CD8-positive, alpha-beta T cell (primary cell): ENCODE measurements at regions of chr5 and their contacts with region 1.

Region 1: DNA sequence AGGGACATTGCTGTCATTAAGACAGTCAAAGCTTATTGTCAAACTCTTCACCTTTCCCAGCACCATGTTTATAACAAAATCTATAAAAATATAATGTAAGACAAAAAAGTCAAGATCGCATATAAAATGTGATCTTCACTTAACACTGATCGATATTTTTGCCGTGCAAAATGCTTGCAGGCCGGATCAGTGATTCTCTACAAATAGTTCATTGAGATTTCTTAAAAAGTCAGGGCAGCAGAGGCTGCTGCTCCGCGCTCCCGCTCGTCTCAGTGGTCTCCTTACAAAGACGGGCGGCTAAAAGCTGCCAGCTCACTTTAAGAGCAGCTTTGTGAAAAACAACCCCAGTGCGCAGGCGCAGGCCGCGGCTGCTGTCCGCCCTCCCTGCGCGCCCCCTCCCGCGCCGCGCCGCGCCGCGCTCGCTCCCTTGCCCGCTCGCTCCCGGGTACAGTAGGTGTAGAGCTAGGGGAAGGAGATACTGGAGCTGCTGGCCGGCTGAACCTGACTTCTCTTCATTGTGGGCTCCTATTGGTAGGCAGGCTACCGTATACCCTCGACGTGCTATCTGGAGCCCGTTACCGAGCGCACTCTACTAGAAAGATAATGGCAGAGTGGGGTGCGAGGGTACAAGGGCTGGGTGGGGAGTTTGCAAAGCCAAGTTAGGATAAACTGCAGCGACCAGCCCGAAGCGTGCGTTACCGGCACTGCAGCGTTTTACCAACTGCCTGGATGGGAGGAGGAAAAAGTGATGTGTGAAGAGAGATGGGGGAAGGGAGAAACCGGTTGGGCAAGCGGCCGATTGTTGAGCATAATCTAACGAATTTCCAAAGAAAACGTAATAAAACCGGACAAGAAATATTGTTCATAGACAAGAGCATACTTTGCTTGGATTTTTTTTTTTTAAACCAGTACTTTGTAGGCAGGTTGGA is at the start of gene ARRDC3:
- DNase-seq: peak; percentile 94 to 99 (median 97)
- ATAC-seq: peak; percentile 30
- H3K4me3 ChIP-seq: peak within 1 kb of the TSS; percentile 73 to 99
- H3K4me3 Mint-ChIP-seq: peak within 1 kb of the TSS; percentile 98
- H3K27ac ChIP-seq: peak within 1 kb of the TSS; percentile 96 to 100
- H3K27ac Mint-ChIP-seq: peak within 1 kb of the TSS; percentile 100
- H3K4me1 ChIP-seq: peaks cover 17% of the 10 kb centered on the region
- H3K4me1 Mint-ChIP-seq: peaks cover 26% of the 10 kb centered on the region
- H3K27me3 ChIP-seq: no peaks in the 10 kb centered on the region
- H3K27me3 Mint-ChIP-seq: no peaks in the 10 kb centered on the region
- CTCF ChIP-seq: no peak
- total RNA-seq, gene ARRDC3: 131 to 132 TPM

Region 2: GRCh38 chr5:90474235-90475109 is 908.8 kb before region 1 on chr5 and contains the starts of genes MBLAC2 and POLR3G:
- CTCF ChIA-PET with region 1: no interaction called
- POLR2A ChIA-PET with region 1: interaction called, 12 read pairs
- intact Hi-C with region 1: loop called (anchors 2 to 10 kb)
- DNase-seq: peak; percentile 88 to 96 (median 93)
- ATAC-seq: peak; percentile 88
- H3K4me3 ChIP-seq: peak within 1 kb of the TSS; percentile 93 to 95
- H3K4me3 Mint-ChIP-seq: peak within 1 kb of the TSS; percentile 99
- H3K27ac ChIP-seq: peak within 1 kb of the TSS; percentile 68 to 76
- H3K27ac Mint-ChIP-seq: peak within 1 kb of the TSS; percentile 96
- H3K4me1 ChIP-seq: peaks cover 16% of the 10 kb centered on the region
- H3K4me1 Mint-ChIP-seq: peaks cover 41% of the 10 kb centered on the region
- H3K27me3 ChIP-seq: no peaks in the 10 kb centered on the region
- H3K27me3 Mint-ChIP-seq: no peaks in the 10 kb centered on the region
- CTCF ChIP-seq: peak; percentile 54
- total RNA-seq, gene MBLAC2: 2.8 to 3.2 TPM
- total RNA-seq, gene POLR3G: 0.69 to 1.0 TPM

Region 3: GRCh38 chr5:90932052-90932699 is 451.1 kb before region 1 on chr5:
- CTCF ChIA-PET with region 1: interaction called, 29 read pairs
- POLR2A ChIA-PET with region 1: interaction called, 3 read pairs
- intact Hi-C with region 1: loop called in 1 of 2 experiments (anchors 2 kb)
- DNase-seq: peak in 5 of 9 experiments; percentile 9 to 63 (median 27)
- ATAC-seq: no peak
- H3K4me3 ChIP-seq: no peak overlapping the region
- H3K4me3 Mint-ChIP-seq: no peak overlapping the region
- H3K27ac ChIP-seq: no peak overlapping the region
- H3K27ac Mint-ChIP-seq: no peak overlapping the region
- H3K4me1 ChIP-seq: no peaks in the 10 kb centered on the region
- H3K4me1 Mint-ChIP-seq: peaks cover 4% of the 10 kb centered on the region
- H3K27me3 ChIP-seq: no peaks in the 10 kb centered on the region
- H3K27me3 Mint-ChIP-seq: peaks cover 12% of the 10 kb centered on the region
- CTCF ChIP-seq: peak; percentile 70

Region 4: GRCh38 chr5:91225848-91226686 is 157.2 kb before region 1 on chr5:
- CTCF ChIA-PET with region 1: interaction called, 219 read pairs
- POLR2A ChIA-PET with region 1: interaction called, 52 read pairs
- intact Hi-C with region 1: loop called (anchors 1 kb)
- DNase-seq: peak; percentile 13 to 77 (median 61)
- ATAC-seq: peak; percentile 63
- H3K4me3 ChIP-seq: no peak overlapping the region
- H3K4me3 Mint-ChIP-seq: no peak overlapping the region
- H3K27ac ChIP-seq: no peak overlapping the region
- H3K27ac Mint-ChIP-seq: no peak overlapping the region
- H3K4me1 ChIP-seq: no peaks in the 10 kb centered on the region
- H3K4me1 Mint-ChIP-seq: no peaks in the 10 kb centered on the region
- H3K27me3 ChIP-seq: no peaks in the 10 kb centered on the region
- H3K27me3 Mint-ChIP-seq: no peaks in the 10 kb centered on the region
- CTCF ChIP-seq: peak; percentile 53

Region 5: DNA sequence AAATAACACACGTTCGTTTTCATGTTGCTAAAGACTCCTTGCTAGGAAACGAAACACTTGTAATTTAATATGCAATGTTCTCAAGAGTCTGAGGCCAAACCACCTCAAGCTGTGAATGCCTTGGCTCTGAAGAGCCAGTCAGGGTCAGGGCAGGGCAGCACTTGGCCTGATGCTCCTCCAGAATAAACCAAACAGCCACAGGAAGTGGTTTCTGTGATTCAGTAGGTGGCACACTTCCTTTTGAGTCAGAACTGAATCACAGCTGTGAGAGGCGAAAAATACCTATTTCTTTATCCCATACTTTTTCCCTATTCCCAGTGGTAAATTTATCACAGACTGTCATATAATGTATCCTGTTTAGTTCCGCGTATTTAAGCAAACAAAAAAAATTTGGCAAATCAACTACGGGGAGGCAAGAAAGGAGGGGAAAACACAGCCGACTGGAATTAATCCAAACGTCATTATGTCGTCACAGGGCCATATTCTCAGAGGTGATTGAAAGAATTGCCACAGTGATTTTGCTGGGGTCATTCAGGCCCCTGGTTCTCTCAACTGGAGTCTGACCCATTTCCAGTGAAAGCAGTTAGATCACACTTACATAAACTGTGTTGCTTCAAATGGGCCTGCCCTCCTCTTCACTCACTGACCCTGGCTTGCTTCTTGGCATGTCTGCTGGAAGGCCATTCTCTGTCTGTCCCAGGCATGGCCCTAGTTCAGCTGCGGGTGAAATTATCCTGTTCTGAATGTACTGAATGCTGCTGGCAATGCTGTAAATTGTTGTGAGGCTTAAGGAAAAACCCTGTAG is 71.4 kb before region 1 on chr5:
- CTCF ChIA-PET with region 1: interaction called, 50 read pairs
- POLR2A ChIA-PET with region 1: interaction called, 158 read pairs
- intact Hi-C with region 1: loop called (anchors 1 to 2 kb)
- DNase-seq: peak; percentile 30 to 91 (median 73)
- ATAC-seq: peak; percentile 72
- H3K4me3 ChIP-seq: no peak overlapping the region
- H3K4me3 Mint-ChIP-seq: peak overlapping the region; percentile 49
- H3K27ac ChIP-seq: peak overlapping the region; percentile 40 to 75
- H3K27ac Mint-ChIP-seq: peak overlapping the region; percentile 93
- H3K4me1 ChIP-seq: peaks cover 39% of the 10 kb centered on the region
- H3K4me1 Mint-ChIP-seq: peaks cover 49% of the 10 kb centered on the region
- H3K27me3 ChIP-seq: no peaks in the 10 kb centered on the region
- H3K27me3 Mint-ChIP-seq: no peaks in the 10 kb centered on the region
- CTCF ChIP-seq: no peak

Region 6: GRCh38 chr5:91419571-91420537 is 36.6 kb after region 1 on chr5:
- CTCF ChIA-PET with region 1: interaction called, 56 read pairs
- POLR2A ChIA-PET with region 1: interaction called, 27 read pairs
- intact Hi-C with region 1: loop called (anchors 1 to 2 kb)
- DNase-seq: peak; percentile 47 to 82 (median 77)
- ATAC-seq: no peak
- H3K4me3 ChIP-seq: no peak overlapping the region
- H3K4me3 Mint-ChIP-seq: no peak overlapping the region
- H3K27ac ChIP-seq: no peak overlapping the region
- H3K27ac Mint-ChIP-seq: no peak overlapping the region
- H3K4me1 ChIP-seq: peaks cover 9% of the 10 kb centered on the region
- H3K4me1 Mint-ChIP-seq: peaks cover 22% of the 10 kb centered on the region
- H3K27me3 ChIP-seq: no peaks in the 10 kb centered on the region
- H3K27me3 Mint-ChIP-seq: no peaks in the 10 kb centered on the region
- CTCF ChIP-seq: peak; percentile 92

Region 7: DNA sequence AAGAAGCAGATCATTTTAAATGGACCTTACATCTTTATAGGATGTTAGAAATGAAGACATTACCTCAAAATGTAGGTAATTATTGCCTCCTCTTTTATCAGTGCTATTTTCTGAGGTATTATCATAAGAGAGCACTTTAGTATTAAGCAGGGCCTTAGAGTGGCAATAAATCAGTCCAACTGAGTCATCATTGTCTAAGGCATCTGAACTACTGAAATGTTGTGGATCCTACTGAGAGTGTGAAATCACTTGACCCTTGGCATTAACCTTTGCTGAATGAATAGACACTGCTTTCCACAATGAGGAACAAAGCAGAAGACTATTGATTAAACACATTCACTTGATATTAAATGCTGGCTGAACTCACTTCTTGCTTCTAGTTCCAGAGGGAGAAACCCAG is 224.4 kb after region 1 on chr5:
- CTCF ChIA-PET with region 1: no interaction called
- POLR2A ChIA-PET with region 1: no interaction called
- intact Hi-C with region 1: no loop called
- DNase-seq: no peak
- ATAC-seq: no peak
- H3K4me3 ChIP-seq: no peak overlapping the region
- H3K4me3 Mint-ChIP-seq: no peak overlapping the region
- H3K27ac ChIP-seq: no peak overlapping the region
- H3K27ac Mint-ChIP-seq: no peak overlapping the region
- H3K4me1 ChIP-seq: no peaks in the 10 kb centered on the region
- H3K4me1 Mint-ChIP-seq: no peaks in the 10 kb centered on the region
- H3K27me3 ChIP-seq: no peaks in the 10 kb centered on the region
- H3K27me3 Mint-ChIP-seq: peaks cover 2% of the 10 kb centered on the region
- CTCF ChIP-seq: no peak